ENCODE measurements at regions of chr11 and their contacts with region 1.

Region 1: DNA sequence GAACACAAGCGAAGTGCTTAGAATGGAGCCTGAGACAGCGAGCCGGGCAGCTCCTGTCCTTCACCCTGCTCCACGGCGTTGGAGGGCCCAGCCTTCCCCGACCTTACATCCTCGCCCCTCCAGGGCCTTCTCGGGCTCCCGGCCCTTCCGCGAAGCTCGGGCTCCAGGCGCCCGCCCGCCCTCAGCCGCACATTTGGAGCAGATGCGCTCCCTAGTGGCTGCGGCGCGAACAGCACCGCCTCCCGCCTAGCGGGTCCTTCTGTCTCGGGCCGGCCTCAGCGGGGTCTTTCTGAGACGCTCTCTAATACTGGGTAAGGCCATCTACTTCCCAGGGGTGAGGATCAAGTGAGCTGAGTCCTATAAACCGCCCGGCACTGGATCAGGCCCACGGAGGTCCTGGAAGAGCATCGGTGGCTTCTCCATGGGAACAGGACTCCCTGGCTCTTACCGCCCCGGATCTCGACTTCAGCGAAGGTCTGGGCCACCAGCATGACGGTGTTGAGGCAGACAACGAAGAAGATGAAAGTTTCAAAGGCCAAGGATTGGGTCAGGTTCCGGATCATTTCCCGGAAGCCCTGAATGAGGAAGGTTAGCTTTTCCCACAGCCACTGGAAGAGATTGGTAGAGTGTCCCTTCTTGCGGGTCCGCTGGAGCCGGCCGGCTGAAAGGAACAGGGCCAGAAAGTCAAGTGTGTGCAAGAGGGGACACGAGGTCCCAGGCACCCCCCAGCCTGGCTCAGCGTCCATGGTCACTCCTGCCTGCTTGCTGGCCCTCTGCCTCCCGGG is 3.7 kb downstream of the CATSPER1 start:
- DNase-seq: peak; percentile 83
- ATAC-seq: peak; percentile 91
- H3K4me3 Mint-ChIP-seq: no peak overlapping the region
- H3K27ac Mint-ChIP-seq: no peak overlapping the region
- H3K4me1 Mint-ChIP-seq: peaks cover 23% of the 10 kb centered on the region
- H3K27me3 Mint-ChIP-seq: peaks cover 8% of the 10 kb centered on the region

Region 2: DNA sequence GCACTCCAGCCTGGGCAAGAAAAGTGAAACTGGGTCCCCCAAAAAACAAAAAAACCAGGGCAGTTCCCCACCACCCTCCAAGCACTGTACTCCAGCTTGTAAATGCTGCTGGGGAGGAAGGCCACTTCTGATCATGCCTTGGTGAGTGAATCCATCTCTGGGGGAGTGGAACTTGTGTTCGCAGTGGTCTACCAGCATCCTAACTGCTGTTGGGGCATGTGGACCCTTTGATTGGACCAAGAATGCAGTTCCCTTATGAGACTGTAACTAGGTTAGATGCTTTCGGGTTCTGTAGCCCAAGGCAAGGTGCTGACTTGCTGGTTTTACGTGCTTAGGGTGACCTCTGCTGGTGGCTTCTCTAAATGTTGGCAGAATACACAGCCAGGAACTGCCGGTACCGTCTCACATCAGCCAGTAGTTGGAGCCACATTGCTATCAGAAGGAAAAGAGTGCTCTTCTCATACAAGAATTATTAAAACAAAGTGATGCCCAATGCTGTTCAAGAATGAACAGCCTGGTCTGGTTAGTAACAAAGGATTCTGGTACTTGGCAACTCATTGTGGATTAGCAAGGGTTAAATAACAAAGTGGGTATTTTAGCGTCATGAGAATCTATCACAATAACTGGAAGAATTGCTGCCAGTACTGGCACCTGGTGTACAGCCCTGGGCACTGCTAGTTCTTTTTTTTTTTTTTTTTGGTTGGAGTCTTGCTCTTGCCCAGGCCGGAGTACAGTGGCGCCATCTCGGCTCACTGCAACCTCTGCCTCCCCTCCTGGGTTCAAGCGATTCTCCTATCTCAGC is 33.6 kb before region 1 on chr11:
- CTCF ChIA-PET with region 1: interaction called, 11 read pairs
- DNase-seq: peak; percentile 96
- ATAC-seq: peak; percentile 100
- H3K4me3 Mint-ChIP-seq: no peak overlapping the region
- H3K27ac Mint-ChIP-seq: peak overlapping the region; percentile 80
- H3K4me1 Mint-ChIP-seq: peaks cover 8% of the 10 kb centered on the region
- H3K27me3 Mint-ChIP-seq: no peaks in the 10 kb centered on the region

Region 3: DNA sequence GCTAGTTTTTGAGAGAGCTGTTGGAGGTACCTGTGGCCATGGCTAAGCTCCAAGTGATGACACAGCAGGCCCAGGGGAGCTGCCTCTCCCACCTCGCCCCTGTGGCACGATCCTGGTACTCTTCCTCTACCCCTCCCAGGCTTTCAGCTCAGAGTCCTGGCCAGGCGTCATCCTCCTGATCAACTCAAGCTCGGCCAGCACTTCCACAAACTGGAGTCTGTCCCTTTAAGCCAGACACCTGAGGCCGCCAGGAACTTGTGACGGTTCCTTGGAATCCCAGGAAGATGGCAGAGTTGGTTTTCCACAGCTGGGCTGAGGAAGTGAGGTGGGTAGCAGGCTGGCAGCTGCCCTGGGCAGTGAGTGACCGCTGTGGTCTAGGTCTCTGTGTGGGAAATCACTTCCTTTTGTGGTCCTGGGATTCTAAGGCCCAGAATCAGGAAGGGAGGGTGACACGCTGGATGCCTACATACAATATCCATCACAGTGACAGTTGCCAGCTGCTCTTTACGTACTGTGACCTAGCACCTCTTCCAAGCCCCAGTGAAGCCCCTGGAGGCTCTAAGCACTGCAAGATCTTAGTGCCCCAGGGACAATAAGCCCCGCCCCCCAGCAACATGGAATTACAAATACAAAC is 14.0 kb before region 1 on chr11:
- CTCF ChIA-PET with region 1: interaction called, 20 read pairs
- DNase-seq: no peak
- ATAC-seq: no peak
- H3K4me3 Mint-ChIP-seq: no peak overlapping the region
- H3K27ac Mint-ChIP-seq: no peak overlapping the region
- H3K4me1 Mint-ChIP-seq: peaks cover 10% of the 10 kb centered on the region
- H3K27me3 Mint-ChIP-seq: peaks cover 31% of the 10 kb centered on the region

Region 4: GRCh38 chr11:66035653-66036333 is 13.2 kb after region 1 on chr11:
- CTCF ChIA-PET with region 1: interaction called, 12 read pairs
- DNase-seq: no peak
- ATAC-seq: no peak
- H3K4me3 Mint-ChIP-seq: no peak overlapping the region
- H3K27ac Mint-ChIP-seq: no peak overlapping the region
- H3K4me1 Mint-ChIP-seq: no peaks in the 10 kb centered on the region
- H3K27me3 Mint-ChIP-seq: peaks cover 22% of the 10 kb centered on the region

Region 5: DNA sequence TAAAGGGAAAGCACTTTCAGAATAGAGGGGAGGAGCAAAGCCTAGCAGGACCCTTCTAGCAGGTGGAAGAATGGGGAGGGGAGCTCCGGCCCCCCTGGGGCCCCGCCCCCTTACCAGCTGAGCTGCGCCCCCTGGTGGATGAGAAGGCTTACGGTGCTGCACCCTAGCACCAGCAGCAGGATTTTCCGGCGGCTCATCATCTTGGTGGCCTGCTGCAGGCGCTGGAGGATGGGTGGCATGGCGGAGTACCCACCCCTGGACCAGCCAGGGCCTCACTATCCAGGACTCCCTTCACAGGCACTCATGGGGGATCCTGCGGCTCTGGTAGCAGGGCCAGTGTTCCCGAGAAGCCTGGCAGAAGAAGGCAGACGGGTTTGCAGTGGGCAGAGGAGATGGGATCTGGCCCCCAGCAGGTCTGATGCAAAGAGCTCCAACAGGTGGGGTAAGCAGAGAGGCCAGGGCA is 22.6 kb after region 1 on chr11:
- CTCF ChIA-PET with region 1: interaction called, 51 read pairs
- DNase-seq: peak; percentile 86
- ATAC-seq: peak; percentile 96
- H3K4me3 Mint-ChIP-seq: no peak overlapping the region
- H3K27ac Mint-ChIP-seq: no peak overlapping the region
- H3K4me1 Mint-ChIP-seq: peaks cover 17% of the 10 kb centered on the region
- H3K27me3 Mint-ChIP-seq: peaks cover 2% of the 10 kb centered on the region

Region 6: GRCh38 chr11:66051766-66052663 is 29.4 kb after region 1 on chr11 and contains the start of gene SF3B2:
- CTCF ChIA-PET with region 1: interaction called, 51 read pairs
- DNase-seq: peak; percentile 99
- ATAC-seq: peak; percentile 98
- H3K4me3 Mint-ChIP-seq: peak within 1 kb of the TSS; percentile 89
- H3K27ac Mint-ChIP-seq: peak within 1 kb of the TSS; percentile 99
- H3K4me1 Mint-ChIP-seq: peaks cover 35% of the 10 kb centered on the region
- H3K27me3 Mint-ChIP-seq: no peaks in the 10 kb centered on the region
- total RNA-seq, gene SF3B2: 256 to 281 TPM

Region 7: GRCh38 chr11:66371627-66372415 is 349.2 kb after region 1 on chr11 and contains the start of gene SLC29A2:
- CTCF ChIA-PET with region 1: no interaction called
- DNase-seq: peak; percentile 89
- ATAC-seq: peak; percentile 89
- H3K4me3 Mint-ChIP-seq: peak within 1 kb of the TSS; percentile 76
- H3K27ac Mint-ChIP-seq: peak within 1 kb of the TSS; percentile 92
- H3K4me1 Mint-ChIP-seq: peaks cover 19% of the 10 kb centered on the region
- H3K27me3 Mint-ChIP-seq: peaks cover 6% of the 10 kb centered on the region
- total RNA-seq, gene SLC29A2: 7.6 to 10.1 TPM

Measured in activated CD8-positive, alpha-beta memory T cell treated with anti-CD3 and anti-CD28 coated beads, Interleukin-2, amount 10 ng/mL, durations not matched to agents 7 days and 5 days (primary cell).